Endothelial cell of umbilical vein (primary cell): ENCODE measurements at regions of chr11 and their contacts with region 1.

Region 1: DNA sequence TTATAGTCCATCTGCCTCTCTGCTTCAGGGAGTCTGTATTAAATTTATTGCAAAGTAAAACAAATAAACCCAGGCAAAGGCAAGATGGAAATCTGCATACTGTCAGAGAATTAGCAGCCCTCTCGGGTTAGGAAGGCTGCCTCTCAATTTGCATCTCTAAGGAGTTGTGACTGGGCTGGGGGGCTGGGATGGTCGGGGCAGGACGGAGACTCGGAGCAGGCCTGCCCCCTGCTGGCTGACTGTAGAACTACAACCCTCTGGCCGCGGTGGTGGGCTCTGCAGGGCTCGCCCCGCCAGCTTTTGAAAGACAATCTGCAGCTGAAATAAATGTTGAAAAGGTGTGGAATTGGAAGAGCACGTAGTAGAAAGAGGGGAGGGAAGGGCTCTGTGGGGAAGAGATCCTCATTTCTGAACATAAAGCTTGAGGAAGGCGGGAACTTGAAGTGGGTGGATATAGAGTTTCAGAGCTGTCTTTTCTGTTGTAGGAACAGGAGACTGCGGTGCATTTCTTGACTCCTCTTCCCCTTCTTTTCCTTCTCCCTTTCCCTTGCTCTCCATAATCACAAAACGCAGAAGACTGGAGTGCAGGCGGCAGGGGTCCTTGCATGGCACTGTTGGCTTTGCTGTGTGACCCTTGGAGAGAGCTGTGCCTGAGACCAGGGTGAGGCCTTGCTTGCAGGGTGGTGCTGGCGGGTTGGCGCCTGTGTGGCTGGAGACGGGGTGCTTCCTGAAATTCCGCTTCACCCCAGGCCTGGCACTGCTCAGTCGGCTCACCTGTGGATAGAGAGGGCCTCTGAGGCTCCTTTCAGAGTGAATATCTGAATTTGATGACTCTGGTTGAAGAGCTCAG is 22.6 kb upstream of the PKNOX2 start:
- DNase-seq: peak; percentile 52
- H3K4me3 ChIP-seq: no peak overlapping the region
- H3K27ac ChIP-seq: no peak overlapping the region
- H3K4me1 ChIP-seq: no peaks in the 10 kb centered on the region
- H3K27me3 ChIP-seq: peaks cover 0 to 10% of the 10 kb centered on the region in 2 experiments
- CTCF ChIP-seq: peak; percentile 90 to 95
- POLR2A ChIP-seq: no peak

Region 2: DNA sequence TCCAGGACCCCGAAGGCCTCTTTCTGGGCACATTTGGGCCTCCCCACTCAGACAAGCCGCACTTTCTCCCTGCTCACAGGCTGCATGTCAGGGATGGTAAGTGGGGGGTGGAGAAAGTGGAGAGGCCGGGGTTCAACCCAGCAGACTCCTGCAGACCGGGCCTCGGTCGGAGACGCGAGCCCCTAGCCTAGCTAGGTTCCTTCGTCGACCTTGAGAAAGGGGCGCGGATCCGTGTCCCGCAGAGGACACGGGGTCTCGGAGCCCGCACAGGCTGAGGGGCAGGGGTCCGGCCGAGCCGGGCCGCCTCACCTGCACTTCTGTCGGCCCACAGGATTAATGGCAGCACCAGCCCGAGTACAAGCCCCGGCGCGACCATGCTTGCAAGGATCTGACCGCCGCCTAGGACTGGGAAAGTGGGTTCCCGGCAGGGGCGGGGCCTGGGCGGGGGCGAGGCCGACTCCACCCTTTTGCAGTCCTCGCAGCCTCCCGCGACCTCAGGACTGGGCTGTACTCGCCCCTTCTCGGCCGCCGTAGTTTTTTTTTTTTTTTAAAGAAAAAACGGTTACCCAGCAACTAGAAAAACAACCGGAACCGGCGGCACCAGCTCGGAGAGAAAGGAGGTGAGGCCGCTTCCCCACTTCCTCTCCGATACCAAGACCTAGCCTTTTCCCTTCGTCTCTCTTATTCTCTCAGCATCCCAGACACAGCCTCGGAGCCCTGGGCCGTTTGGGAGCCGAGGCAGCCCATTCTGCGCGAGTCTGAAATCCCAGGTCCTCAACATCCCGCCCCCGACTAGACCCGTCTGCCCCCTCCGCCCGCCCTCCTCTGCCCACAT is 468.4 kb before region 1 on chr11 and contains the starts of genes SIAE and SPA17:
- CTCF ChIA-PET with region 1: no interaction called
- POLR2A ChIA-PET with region 1: no interaction called
- dilution Hi-C with region 1: no loop called
- intact Hi-C with region 1: no loop called
- DNase-seq: peak; percentile 97
- H3K4me3 ChIP-seq: peak within 1 kb of the TSS; percentile 65 to 95 (median 65)
- H3K27ac ChIP-seq: peak within 1 kb of the TSS; percentile 63
- H3K4me1 ChIP-seq: peaks cover 26% of the 10 kb centered on the region
- H3K27me3 ChIP-seq: no peaks in the 10 kb centered on the region
- CTCF ChIP-seq: no peak
- POLR2A ChIP-seq: peak; percentile 96
- total RNA-seq, gene SIAE: 15.1 and 16.9 TPM in 2 replicates
- total RNA-seq, gene SPA17: 4.7 and 6.1 TPM in 2 replicates

Region 3: GRCh38 chr11:124970925-124971324 is 171.0 kb before region 1 on chr11:
- CTCF ChIA-PET with region 1: interaction called, 37 read pairs
- POLR2A ChIA-PET with region 1: no interaction called
- dilution Hi-C with region 1: no loop called
- intact Hi-C with region 1: loop called (anchors 2 kb)
- DNase-seq: peak; percentile 26
- H3K4me3 ChIP-seq: no peak overlapping the region
- H3K27ac ChIP-seq: no peak overlapping the region
- H3K4me1 ChIP-seq: peaks cover 9% of the 10 kb centered on the region
- H3K27me3 ChIP-seq: no peaks in the 10 kb centered on the region
- CTCF ChIP-seq: no peak
- POLR2A ChIP-seq: no peak

Region 4: GRCh38 chr11:125111343-125112207 is 30.3 kb before region 1 on chr11 and contains the start of gene TMEM218:
- CTCF ChIA-PET with region 1: interaction called, 10 read pairs
- POLR2A ChIA-PET with region 1: no interaction called
- dilution Hi-C with region 1: no loop called
- intact Hi-C with region 1: no loop called
- DNase-seq: peak; percentile 100
- H3K4me3 ChIP-seq: peak within 1 kb of the TSS; percentile 57 to 85 (median 72)
- H3K27ac ChIP-seq: peak within 1 kb of the TSS; percentile 10
- H3K4me1 ChIP-seq: peaks cover 6% of the 10 kb centered on the region
- H3K27me3 ChIP-seq: peaks cover 0 to 1% of the 10 kb centered on the region in 2 experiments
- CTCF ChIP-seq: no peak
- POLR2A ChIP-seq: no peak
- total RNA-seq, gene TMEM218: 17.9 and 23.8 TPM in 2 replicates

Region 5: DNA sequence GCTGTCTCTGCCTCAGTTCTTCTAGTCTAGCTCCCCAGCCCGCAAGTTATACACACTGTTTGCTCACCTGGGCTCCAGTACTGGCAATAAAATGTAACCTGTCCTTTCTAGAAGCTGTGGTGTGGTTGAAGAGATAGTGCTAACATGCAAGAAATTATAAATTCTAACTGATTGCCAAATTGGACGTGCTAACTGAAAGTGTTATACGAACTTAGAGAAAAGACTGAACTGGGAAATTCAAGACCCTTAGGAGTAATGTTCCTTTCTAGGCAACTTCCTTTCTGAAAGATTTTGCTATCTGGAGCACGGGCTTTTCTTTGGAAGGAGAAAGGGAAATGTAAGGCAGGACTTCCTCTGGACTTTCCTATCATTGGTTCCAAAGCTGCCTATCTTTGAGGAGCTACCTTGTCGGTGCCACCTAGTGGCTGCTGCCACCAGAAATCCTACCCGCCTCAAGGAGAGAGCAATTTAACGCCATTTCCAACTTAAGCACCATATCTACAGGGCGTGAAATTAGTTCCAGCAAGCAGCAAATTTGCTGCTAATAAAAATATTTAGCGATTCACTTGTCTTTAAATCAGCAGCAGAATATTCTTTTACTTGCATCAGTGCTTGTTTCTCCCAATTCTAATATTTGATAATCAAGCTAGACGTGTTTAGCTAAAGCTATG is 17.8 kb before region 1 on chr11:
- CTCF ChIA-PET with region 1: interaction called, 39 read pairs
- POLR2A ChIA-PET with region 1: no interaction called
- dilution Hi-C with region 1: no loop called
- intact Hi-C with region 1: no loop called
- DNase-seq: peak; percentile 46
- H3K4me3 ChIP-seq: no peak overlapping the region
- H3K27ac ChIP-seq: no peak overlapping the region
- H3K4me1 ChIP-seq: no peaks in the 10 kb centered on the region
- H3K27me3 ChIP-seq: peaks cover 15 to 16% of the 10 kb centered on the region in 2 experiments
- CTCF ChIP-seq: peak; percentile 37 to 57
- POLR2A ChIP-seq: no peak

Region 6: GRCh38 chr11:125154378-125155099 is 12.6 kb after region 1 on chr11:
- CTCF ChIA-PET with region 1: interaction called, 18 read pairs
- POLR2A ChIA-PET with region 1: no interaction called
- dilution Hi-C with region 1: no loop called
- intact Hi-C with region 1: no loop called
- DNase-seq: no peak
- H3K4me3 ChIP-seq: no peak overlapping the region
- H3K27ac ChIP-seq: no peak overlapping the region
- H3K4me1 ChIP-seq: no peaks in the 10 kb centered on the region
- H3K27me3 ChIP-seq: peaks cover 0 to 9% of the 10 kb centered on the region in 2 experiments
- CTCF ChIP-seq: no peak
- POLR2A ChIP-seq: no peak

Region 7: DNA sequence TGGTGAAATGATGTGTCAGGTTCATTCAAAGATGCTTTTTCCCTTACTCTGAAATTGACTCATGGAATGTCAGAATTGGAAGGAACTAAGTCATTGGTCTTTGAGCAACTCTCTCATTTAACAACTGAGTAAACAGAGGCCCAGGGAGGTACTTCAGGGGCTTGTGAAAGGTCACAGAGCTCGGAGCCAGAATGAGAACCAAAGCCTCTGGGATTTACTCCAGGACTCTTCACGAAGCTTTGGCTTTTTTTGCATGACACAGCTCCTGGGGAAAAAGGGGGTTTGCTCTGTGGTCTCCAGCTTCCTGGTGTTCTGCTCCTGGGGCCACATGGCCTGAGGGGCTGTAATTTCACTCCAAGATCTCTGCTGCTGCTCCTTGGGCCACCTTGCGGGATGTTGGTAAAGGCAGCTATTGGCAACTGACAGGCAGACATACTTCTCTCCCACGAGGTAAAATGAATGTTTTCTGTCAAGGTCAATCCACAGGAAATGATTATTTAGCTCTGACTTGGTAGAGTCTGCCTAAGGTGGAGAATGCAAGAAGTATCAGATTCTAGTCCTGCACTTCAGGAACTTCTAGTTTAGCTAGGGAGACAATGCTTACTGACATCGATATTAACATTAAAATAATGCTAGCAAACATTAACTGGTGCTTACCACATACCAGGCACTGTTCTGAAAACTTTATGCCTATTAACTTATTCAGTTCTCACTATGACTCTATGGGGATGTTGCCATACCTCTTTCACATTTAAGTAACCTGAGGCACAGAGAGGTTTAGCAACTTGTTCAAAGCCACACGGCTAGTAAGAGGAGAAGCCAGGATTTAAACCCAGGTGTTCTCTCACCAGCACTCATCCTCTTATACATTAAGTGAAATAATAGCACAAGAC is 38.7 kb after region 1 on chr11:
- CTCF ChIA-PET with region 1: no interaction called
- POLR2A ChIA-PET with region 1: no interaction called
- dilution Hi-C with region 1: no loop called
- intact Hi-C with region 1: no loop called
- DNase-seq: peak; percentile 32
- H3K4me3 ChIP-seq: no peak overlapping the region
- H3K27ac ChIP-seq: no peak overlapping the region
- H3K4me1 ChIP-seq: no peaks in the 10 kb centered on the region
- H3K27me3 ChIP-seq: peaks cover 2 to 16% of the 10 kb centered on the region in 2 experiments
- CTCF ChIP-seq: no peak
- POLR2A ChIP-seq: no peak

Region 8: GRCh38 chr11:125214571-125215565 is 73.0 kb after region 1 on chr11:
- CTCF ChIA-PET with region 1: no interaction called
- POLR2A ChIA-PET with region 1: no interaction called
- dilution Hi-C with region 1: no loop called
- intact Hi-C with region 1: no loop called
- DNase-seq: peak; percentile 87
- H3K4me3 ChIP-seq: no peak overlapping the region
- H3K27ac ChIP-seq: no peak overlapping the region
- H3K4me1 ChIP-seq: no peaks in the 10 kb centered on the region
- H3K27me3 ChIP-seq: peaks cover 4 to 28% of the 10 kb centered on the region in 2 experiments
- CTCF ChIP-seq: no peak
- POLR2A ChIP-seq: no peak

Region 9: GRCh38 chr11:125404776-125405435 is 263.0 kb after region 1 on chr11:
- CTCF ChIA-PET with region 1: interaction called, 12 read pairs
- POLR2A ChIA-PET with region 1: no interaction called
- dilution Hi-C with region 1: no loop called
- intact Hi-C with region 1: no loop called
- DNase-seq: peak; percentile 47
- H3K4me3 ChIP-seq: no peak overlapping the region
- H3K27ac ChIP-seq: no peak overlapping the region
- H3K4me1 ChIP-seq: peaks cover 4% of the 10 kb centered on the region
- H3K27me3 ChIP-seq: peaks cover 9 to 12% of the 10 kb centered on the region in 2 experiments
- CTCF ChIP-seq: peak; percentile 79 to 99
- POLR2A ChIP-seq: no peak